CD4-positive, alpha-beta memory T cell (primary cell): ENCODE measurements at regions of chr4 and their contacts with region 1.

Region 1: DNA sequence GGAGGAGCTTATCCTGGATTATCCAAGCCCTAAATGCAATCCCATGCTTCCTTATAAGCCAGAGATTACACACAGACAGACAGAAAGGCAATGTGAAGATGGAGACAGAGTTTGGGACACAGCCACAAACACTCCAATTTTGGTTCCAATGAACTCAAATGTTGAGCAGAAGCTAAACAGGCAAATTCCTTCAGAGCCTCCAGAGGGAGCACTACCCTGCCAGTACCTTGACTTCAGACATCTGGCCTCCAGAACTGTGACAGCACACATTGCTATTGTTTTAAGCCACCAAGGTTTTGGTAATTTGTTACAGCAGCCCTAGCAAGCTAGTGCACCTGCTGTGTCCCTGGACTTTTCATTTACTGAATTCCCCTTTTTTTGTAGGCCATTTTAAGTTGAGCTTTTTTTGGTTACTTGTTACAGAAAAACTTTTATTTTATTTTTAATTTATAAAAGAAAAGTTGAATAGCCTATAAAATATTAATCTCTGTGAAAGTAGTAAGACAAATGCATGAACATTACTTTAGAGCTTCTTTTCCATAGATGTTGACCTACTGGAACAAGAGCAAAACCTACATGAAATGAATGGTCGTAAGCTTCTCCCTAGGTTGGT is 33.4 kb upstream of the SRD5A3 start:
- DNase-seq: peak in 4 of 5 donors; percentile 24 to 39 (median 30)
- H3K4me3 ChIP-seq: no peak overlapping the region
- H3K4me3 Mint-ChIP-seq: no peak overlapping the region
- H3K27ac ChIP-seq: no peak overlapping the region
- H3K27ac Mint-ChIP-seq: no peak overlapping the region
- H3K4me1 ChIP-seq: no peaks in the 10 kb centered on the region
- H3K4me1 Mint-ChIP-seq: no peaks in the 10 kb centered on the region
- H3K27me3 ChIP-seq: no peaks in the 10 kb centered on the region
- H3K27me3 Mint-ChIP-seq: no peaks in the 10 kb centered on the region

Region 2: GRCh38 chr4:55554453-55555030 is 241.9 kb after region 1 on chr4:
- CTCF ChIA-PET with region 1: interaction called, 10 read pairs
- POLR2A ChIA-PET with region 1: no interaction called
- intact Hi-C with region 1: loop called (anchors 1 kb)
- DNase-seq: peak in 4 of 5 donors; percentile 36 to 48 (median 41)
- H3K4me3 ChIP-seq: no peak overlapping the region
- H3K4me3 Mint-ChIP-seq: no peak overlapping the region
- H3K27ac ChIP-seq: no peak overlapping the region
- H3K27ac Mint-ChIP-seq: no peak overlapping the region
- H3K4me1 ChIP-seq: peaks cover 9% of the 10 kb centered on the region
- H3K4me1 Mint-ChIP-seq: peaks cover 3 to 19% (median 8%) of the 10 kb centered on the region in 4 donors
- H3K27me3 ChIP-seq: no peaks in the 10 kb centered on the region
- H3K27me3 Mint-ChIP-seq: peaks cover 6 to 9% of the 10 kb centered on the region in 2 donors

Region 3: GRCh38 chr4:55736605-55737183 is 424.1 kb after region 1 on chr4:
- CTCF ChIA-PET with region 1: interaction called, 4 read pairs
- POLR2A ChIA-PET with region 1: no interaction called
- intact Hi-C with region 1: loop called (anchors 1 kb)
- DNase-seq: peak in 4 of 5 donors; percentile 2 to 6 (median 4)
- H3K4me3 ChIP-seq: no peak overlapping the region
- H3K4me3 Mint-ChIP-seq: no peak overlapping the region
- H3K27ac ChIP-seq: no peak overlapping the region
- H3K27ac Mint-ChIP-seq: no peak overlapping the region
- H3K4me1 ChIP-seq: no peaks in the 10 kb centered on the region
- H3K4me1 Mint-ChIP-seq: no peaks in the 10 kb centered on the region
- H3K27me3 ChIP-seq: no peaks in the 10 kb centered on the region
- H3K27me3 Mint-ChIP-seq: peaks cover 21 to 22% of the 10 kb centered on the region in 2 donors